ENCODE measurements at regions of chr1 and their contacts with region 1.

Region 1: GRCh38 chr1:41580520-41581172 is 96.2 kb upstream of the EDN2 start:
- DNase-seq: no peak
- H3K4me3 ChIP-seq: no peak overlapping the region
- H3K27ac ChIP-seq: no peak overlapping the region
- H3K4me1 ChIP-seq: no peaks in the 10 kb centered on the region
- H3K27me3 ChIP-seq: no peaks in the 10 kb centered on the region
- CTCF ChIP-seq: no peak
- EP300 ChIP-seq: no peak
- POLR2A ChIP-seq: no peak
- RAD21 ChIP-seq: no peak

Region 2: DNA sequence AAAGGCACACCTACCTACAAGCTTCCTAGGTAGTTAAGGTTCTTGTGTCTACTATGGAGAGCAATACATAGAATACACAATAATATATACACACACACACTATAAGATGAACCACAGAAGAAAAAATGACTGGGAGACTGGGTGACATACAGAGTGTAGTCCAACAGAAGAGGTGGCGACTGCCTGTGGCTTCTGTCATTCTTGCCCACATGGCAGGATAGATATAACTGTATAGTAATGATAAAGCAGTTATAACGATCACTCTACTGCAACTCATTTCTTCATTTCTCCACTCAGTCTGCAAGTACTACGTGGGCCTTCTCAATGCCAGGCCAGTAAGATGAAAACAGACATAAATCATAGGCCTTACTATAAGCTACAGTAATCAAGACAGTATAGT is 17.7 kb after region 1 on chr1:
- CTCF ChIA-PET with region 1: interaction called, 20 read pairs
- POLR2A ChIA-PET with region 1: no interaction called
- DNase-seq: no peak
- H3K4me3 ChIP-seq: no peak overlapping the region
- H3K27ac ChIP-seq: no peak overlapping the region
- H3K4me1 ChIP-seq: no peaks in the 10 kb centered on the region
- H3K27me3 ChIP-seq: no peaks in the 10 kb centered on the region
- CTCF ChIP-seq: no peak
- EP300 ChIP-seq: no peak
- POLR2A ChIP-seq: no peak
- RAD21 ChIP-seq: no peak